ENCODE measurements at regions of chr4 and their contacts with region 1.

Region 1: DNA sequence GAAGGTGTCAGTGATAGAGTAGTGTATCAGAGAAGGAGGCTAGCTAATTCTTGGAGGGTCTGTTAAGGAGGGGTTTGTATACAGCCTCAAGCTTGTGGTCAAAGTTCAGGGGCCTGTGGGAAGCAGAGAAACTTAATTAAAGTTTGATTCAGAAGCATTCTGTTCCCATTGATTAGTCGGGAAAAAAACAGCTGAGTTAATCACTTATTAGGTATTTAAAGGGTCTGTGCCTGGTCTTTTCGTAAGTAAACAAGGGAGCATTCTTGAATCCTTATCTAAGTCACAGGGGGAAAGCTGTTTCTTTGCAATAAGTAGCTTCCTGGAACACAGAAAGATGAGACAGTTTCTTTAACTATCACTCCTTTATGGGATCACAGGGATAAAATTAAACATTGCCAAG is 492.1 kb downstream of the PCDH10 start:
- DNase-seq: no peak
- H3K4me3 ChIP-seq: no peak overlapping the region
- H3K27ac ChIP-seq: no peak overlapping the region
- H3K4me1 ChIP-seq: no peaks in the 10 kb centered on the region
- H3K27me3 ChIP-seq: no peaks in the 10 kb centered on the region
- CTCF ChIP-seq: no peak
- EP300 ChIP-seq: no peak
- POLR2A ChIP-seq: no peak

Region 2: GRCh38 chr4:133474501-133474900 is 166.7 kb before region 1 on chr4:
- in situ Hi-C with region 1: no loop called
- intact Hi-C with region 1: loop called (anchors 5 kb)
- DNase-seq: no peak
- H3K4me3 ChIP-seq: no peak overlapping the region
- H3K27ac ChIP-seq: no peak overlapping the region
- H3K4me1 ChIP-seq: no peaks in the 10 kb centered on the region
- H3K27me3 ChIP-seq: no peaks in the 10 kb centered on the region
- CTCF ChIP-seq: no peak
- EP300 ChIP-seq: no peak
- POLR2A ChIP-seq: no peak

Region 3: GRCh38 chr4:135408109-135408508 is 1766.9 kb after region 1 on chr4:
- in situ Hi-C with region 1: no loop called
- intact Hi-C with region 1: no loop called
- DNase-seq: no peak
- H3K4me3 ChIP-seq: no peak overlapping the region
- H3K27ac ChIP-seq: no peak overlapping the region
- H3K4me1 ChIP-seq: no peaks in the 10 kb centered on the region
- H3K27me3 ChIP-seq: no peaks in the 10 kb centered on the region
- CTCF ChIP-seq: no peak
- EP300 ChIP-seq: no peak
- POLR2A ChIP-seq: no peak